Panc1 (cell line): ENCODE measurements at regions of chr15 and their contacts with region 1.

Region 1: DNA sequence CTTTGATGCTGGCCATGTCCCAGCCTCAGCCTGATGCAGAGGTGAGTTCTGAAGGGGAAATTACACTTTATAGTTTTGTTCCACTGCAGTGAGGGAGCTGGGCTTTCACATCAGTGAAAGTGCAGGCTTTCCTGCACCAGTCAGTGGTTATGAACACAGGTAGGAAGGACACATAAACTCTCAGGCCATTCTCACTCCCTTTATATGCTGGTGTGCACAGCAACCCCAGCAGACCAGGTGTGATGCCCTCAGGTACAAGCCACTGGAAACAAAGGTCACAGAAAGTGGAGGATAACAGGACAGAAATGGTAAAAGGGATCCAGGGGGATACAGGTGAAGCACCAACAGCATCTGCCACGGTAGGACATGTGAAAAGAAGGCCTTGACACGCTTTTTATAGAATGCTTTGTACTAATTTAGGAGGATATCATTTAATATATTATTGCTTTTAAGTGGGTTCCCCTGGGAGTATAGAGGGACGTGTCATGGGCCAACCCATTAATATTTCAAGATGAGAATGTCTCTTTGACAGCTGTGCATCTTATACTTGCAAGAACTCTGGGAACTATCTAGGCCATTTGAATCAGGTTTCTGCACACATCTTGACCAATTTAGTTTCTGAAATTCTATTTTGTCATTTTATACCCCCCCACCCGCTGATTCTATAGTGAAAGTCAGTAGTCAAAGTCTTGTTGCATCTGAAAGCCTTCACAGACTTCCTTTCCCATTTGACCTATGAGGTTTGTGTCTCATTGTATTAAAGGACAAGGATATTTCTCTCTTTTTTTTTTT is 25.0 kb upstream of the BLM start:
- DNase-seq: no peak
- ATAC-seq: no peak
- H3K4me3 ChIP-seq: no peak overlapping the region
- H3K27ac ChIP-seq: no peak overlapping the region
- H3K4me1 ChIP-seq: no peaks in the 10 kb centered on the region
- H3K27me3 ChIP-seq: no peaks in the 10 kb centered on the region
- CTCF ChIP-seq: no peak

Region 2: GRCh38 chr15:90648137-90649070 is 43.8 kb before region 1 on chr15:
- CTCF ChIA-PET with region 1: interaction called, 3 read pairs
- POLR2A ChIA-PET with region 1: no interaction called
- in situ Hi-C with region 1: no loop called
- intact Hi-C with region 1: loop called (anchors 2 kb)
- DNase-seq: no peak
- ATAC-seq: peak; percentile 60
- H3K4me3 ChIP-seq: no peak overlapping the region
- H3K27ac ChIP-seq: no peak overlapping the region
- H3K4me1 ChIP-seq: peaks cover 8% of the 10 kb centered on the region
- H3K27me3 ChIP-seq: no peaks in the 10 kb centered on the region
- CTCF ChIP-seq: peak; percentile 95